ENCODE measurements at regions of chr9 and their contacts with region 1.

Region 1: DNA sequence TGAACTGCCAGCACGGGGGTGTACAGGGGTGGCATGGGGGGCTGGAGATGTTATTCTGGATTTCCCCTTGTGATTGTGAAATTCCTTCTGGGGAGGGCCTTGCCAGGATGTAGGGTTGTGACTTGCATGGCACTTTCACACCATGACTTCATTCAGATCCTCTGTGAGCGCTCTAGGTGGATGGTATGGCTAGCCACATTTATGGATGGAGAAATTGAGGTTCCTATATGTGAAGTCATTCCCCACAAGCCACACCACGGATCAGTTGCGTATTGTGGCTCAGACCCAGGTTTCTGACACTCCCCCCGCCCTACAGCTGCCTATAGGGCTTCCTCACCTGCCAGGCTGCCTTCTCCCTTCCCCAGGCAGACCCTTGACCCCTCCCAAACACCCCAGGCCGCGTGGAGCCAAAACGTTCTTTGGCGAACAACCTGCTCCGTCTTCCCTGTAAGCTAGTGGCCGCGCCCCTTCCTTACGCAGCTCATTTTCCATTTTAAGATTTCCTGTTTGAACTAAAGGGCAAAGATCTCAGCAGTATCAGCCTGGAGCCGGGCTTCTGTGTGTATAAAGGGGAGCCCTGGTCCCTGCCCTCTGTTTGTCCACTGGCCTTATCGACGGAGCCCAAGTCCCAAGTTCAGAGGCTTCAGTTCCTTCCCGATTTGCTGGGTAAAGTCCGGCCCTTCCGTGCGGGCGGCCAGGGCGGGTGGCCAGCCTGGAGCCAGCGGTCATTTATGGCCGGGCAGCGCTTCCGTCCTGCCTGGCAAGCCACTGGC is 97.8 kb upstream of the KLF4 start:
- DNase-seq: peak; percentile 69
- H3K4me3 ChIP-seq: peak overlapping the region in 2 of 3 experiments; percentile 10 to 38
- H3K27ac ChIP-seq: peak overlapping the region; percentile 58
- H3K4me1 ChIP-seq: peaks cover 12% of the 10 kb centered on the region
- H3K27me3 ChIP-seq: no peaks in the 10 kb centered on the region
- CTCF ChIP-seq: no peak
- POLR2A ChIP-seq: no peak

Region 2: GRCh38 chr9:106916479-106917240 is 670.7 kb before region 1 on chr9:
- CTCF ChIA-PET with region 1: no interaction called
- POLR2A ChIA-PET with region 1: no interaction called
- dilution Hi-C with region 1: no loop called
- intact Hi-C with region 1: no loop called
- DNase-seq: peak; percentile 89
- H3K4me3 ChIP-seq: peak overlapping the region in 1 of 3 experiments; percentile 19
- H3K27ac ChIP-seq: peak overlapping the region; percentile 92
- H3K4me1 ChIP-seq: peaks cover 33% of the 10 kb centered on the region
- H3K27me3 ChIP-seq: no peaks in the 10 kb centered on the region
- CTCF ChIP-seq: no peak
- POLR2A ChIP-seq: peak; percentile 29

Region 3: DNA sequence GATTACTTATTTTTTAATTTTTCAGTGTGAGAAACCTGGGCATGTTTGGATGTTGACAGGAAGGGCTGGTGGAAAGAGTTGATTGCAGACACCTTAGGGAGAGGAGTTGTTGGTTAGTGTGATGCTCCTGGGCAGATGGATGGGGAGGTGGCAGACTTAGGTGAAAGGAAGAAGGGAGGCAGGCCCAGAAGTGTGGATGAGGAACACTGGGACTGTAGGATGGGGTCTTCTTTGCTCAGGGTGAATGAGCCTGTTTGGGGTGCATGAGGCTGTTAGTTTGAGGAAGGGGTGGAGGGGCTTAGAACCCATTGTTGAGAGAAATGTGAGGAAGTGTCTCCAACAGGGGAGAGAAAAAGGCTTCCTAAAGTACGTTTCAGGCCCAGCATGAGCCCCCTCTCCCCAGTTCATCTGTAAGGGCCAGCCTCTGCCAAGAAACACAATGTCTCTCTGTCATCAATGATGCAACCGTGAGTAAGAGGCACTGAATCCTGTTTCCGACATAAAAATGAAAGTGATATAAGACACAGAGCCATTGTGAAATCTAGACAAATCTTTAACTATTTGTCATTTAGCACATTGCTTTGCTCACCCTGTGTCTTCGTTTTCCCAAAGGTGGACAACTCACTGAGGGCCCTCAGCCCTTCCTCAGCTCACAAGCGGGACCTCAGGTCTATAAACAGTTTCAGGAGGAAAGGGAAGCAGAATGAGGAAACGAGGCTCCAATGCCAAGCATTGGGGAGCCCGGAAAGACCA is 39.2 kb before region 1 on chr9:
- CTCF ChIA-PET with region 1: interaction called, 3 read pairs
- POLR2A ChIA-PET with region 1: no interaction called
- dilution Hi-C with region 1: no loop called
- intact Hi-C with region 1: loop called (anchors 1 kb)
- DNase-seq: peak; percentile 80
- H3K4me3 ChIP-seq: peak overlapping the region in 2 of 3 experiments; percentile 10 to 24
- H3K27ac ChIP-seq: peak overlapping the region; percentile 74
- H3K4me1 ChIP-seq: peaks cover 16% of the 10 kb centered on the region
- H3K27me3 ChIP-seq: no peaks in the 10 kb centered on the region
- CTCF ChIP-seq: no peak
- POLR2A ChIP-seq: no peak

Region 4: DNA sequence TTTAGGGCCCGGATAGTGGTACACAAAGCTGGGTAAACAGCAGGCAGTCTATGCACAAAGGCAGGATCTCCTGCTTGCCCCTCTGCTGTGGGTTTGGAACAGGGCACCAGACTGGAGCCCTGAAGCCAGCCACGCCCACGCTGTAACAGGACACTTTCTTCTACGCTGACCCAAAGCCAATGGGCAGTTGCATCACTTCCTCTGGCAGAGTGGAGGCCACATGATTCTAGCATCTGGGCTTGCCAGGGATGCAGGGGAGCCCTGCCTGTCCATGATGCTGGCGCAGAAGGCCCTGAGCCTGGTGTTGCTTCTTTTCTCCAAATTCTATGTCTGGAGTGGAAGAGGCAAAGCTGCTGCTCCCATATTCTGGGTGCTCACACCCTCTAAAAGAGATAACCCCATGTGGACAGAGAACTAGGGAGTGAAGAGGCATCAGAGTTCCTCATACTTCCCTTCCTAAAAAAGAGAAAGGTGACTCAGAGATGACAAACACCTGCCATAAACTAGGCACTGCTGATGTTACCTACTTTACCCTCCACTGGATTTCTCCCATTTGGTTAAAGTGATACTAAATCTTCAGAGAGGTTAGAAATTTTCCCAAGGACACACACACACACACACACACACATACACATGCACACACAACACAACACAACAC is 162.5 kb after region 1 on chr9:
- CTCF ChIA-PET with region 1: interaction called, 3 read pairs
- POLR2A ChIA-PET with region 1: no interaction called
- dilution Hi-C with region 1: no loop called
- intact Hi-C with region 1: loop called (anchors 5 kb)
- DNase-seq: peak; percentile 84
- H3K4me3 ChIP-seq: no peak overlapping the region
- H3K27ac ChIP-seq: peak overlapping the region; percentile 60
- H3K4me1 ChIP-seq: peaks cover 46% of the 10 kb centered on the region
- H3K27me3 ChIP-seq: no peaks in the 10 kb centered on the region
- CTCF ChIP-seq: no peak
- POLR2A ChIP-seq: peak; percentile 7